Caco-2 (cell line): ENCODE measurements at regions of chr1 and their contacts with region 1.

Region 1: DNA sequence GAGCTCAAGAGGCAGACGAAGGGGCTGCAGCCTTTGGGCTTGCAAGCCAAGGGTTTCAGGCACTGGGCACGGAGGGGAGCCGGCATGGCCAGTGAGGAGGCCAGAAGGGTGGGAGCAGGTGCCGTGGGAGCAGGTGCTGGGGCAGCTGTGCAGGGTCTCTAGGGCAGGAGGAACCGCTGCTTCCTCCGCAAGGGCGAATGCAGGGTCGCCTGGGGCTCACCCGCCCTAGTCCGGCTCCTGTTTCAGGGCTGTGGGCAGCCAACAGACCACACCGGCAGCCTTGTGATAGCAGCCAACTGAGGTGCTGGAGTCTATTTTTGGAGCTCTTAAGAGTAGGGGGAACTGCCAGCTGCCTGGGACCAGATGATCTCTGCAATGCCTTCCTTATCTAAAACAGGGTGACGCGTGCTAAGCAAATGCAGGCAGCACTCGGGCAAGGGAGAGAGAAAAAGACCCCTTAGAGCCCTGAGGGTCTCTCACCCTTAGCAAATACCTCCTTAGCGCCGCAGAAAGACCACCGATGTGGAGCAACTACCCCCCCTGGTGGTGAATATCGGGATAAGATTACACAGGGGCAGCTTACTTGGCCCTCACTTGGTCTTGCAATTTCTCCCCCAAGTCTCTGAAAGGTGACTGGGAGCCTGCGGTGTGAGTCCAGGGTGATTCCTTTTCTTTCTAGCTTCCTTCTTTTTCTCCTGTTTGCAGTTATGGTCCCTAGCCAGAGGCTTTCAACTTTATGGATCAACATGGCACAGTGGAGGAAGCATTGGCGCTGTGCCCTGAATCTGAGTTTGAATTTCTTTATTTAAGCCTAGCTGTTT is 20.7 kb upstream of the MAPKAPK2 start:
- DNase-seq: peak; percentile 59 to 78
- H3K4me3 ChIP-seq: no peak overlapping the region
- H3K4me3 Mint-ChIP-seq: no peak overlapping the region
- H3K27ac Mint-ChIP-seq: no peak overlapping the region
- H3K4me1 ChIP-seq: peaks cover 3% of the 10 kb centered on the region; the same call in 1 of the 2 replicates
- H3K4me1 Mint-ChIP-seq: peaks cover 15% of the 10 kb centered on the region
- H3K27me3 ChIP-seq: no peaks in the 10 kb centered on the region
- H3K27me3 Mint-ChIP-seq: peaks cover 7% of the 10 kb centered on the region
- CTCF ChIP-seq: peak; percentile 72 to 96

Region 2: DNA sequence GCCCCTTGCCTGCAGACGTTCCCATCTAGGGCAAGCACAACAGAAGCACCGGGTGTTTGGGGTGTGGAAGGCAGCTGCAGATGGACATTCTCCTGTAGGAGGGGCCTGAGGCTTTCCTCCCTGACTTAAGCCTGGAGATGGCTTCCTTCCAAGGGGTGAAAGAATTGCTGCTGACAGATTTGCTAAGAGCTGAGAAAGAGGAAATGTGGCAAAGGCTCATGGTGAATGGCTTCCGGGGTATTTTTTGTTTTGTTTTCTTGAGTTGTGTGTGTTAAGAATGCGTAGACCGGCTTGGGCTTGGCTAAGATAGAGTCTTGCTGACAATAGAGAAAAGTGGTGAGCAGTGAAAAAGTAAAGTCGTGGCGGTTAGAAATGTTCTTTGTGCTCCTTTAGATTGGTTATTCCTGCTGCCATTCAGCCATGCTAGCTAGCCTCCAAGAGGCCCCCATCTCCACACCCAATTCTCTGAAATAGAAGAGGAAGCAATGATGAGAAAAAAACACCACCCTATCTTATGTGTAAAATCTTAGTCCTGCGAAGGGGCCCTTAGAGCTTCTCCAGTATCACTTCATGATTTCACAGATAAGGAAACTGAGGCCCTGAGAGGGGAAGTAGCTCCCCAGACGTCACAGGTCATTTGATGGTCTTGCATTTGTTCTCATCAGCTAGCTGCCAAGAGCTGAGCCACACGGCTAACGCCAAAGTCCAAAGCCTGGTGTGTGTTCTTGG is 88.7 kb before region 1 on chr1:
- CTCF ChIA-PET with region 1: no interaction called
- POLR2A ChIA-PET with region 1: no interaction called
- intact Hi-C with region 1: no loop called
- DNase-seq: no peak
- H3K4me3 ChIP-seq: no peak overlapping the region
- H3K4me3 Mint-ChIP-seq: no peak overlapping the region
- H3K27ac Mint-ChIP-seq: no peak overlapping the region
- H3K4me1 ChIP-seq: no peaks in the 10 kb centered on the region
- H3K4me1 Mint-ChIP-seq: no peaks in the 10 kb centered on the region
- H3K27me3 ChIP-seq: no peaks in the 10 kb centered on the region
- H3K27me3 Mint-ChIP-seq: peaks cover 9% of the 10 kb centered on the region
- CTCF ChIP-seq: no peak

Region 3: DNA sequence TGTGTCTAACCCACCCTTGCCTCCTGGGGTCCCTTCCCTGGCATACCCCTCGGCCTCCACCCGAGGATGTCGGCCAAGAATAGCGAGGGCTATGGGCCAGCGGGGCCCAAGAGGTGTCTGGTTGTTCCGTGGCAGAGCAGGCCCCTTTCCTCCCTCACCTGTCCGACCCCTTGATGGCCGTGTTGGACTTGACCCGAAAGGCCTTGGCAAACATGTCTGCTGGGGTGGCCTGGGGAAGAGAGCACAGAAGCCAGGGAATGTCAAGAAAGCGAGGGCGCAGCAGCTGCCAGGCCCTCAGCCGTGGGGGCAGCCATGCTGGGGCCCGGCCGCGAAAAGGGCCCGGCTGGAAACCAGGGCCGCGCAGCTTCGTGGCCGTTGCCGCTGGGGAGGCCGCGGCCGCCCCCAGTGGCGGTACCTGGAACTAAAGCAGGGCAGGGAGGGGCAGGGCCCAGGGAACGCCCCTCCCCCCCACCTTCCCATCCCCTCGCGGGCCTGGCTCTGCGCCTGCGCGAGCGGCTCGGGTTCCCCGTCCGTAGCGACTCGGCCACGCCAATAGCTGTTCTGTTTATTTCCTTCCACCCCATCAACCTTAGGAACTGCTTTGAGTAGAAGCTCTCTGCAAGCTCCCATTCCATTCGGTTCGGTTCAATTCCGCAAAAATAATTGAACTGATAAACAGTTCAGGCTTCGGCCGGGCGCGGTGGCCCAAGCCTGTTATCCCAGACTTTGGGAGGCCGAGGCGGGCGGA is 51.7 kb before region 1 on chr1 and contains the start of gene EIF2D:
- CTCF ChIA-PET with region 1: interaction called, 13 read pairs
- POLR2A ChIA-PET with region 1: interaction called, 3 read pairs
- intact Hi-C with region 1: loop called (anchors 1 kb)
- DNase-seq: peak; percentile 91 to 97
- H3K4me3 ChIP-seq: peak within 1 kb of the TSS; percentile 96
- H3K4me3 Mint-ChIP-seq: peak within 1 kb of the TSS; percentile 82
- H3K27ac Mint-ChIP-seq: peak within 1 kb of the TSS; percentile 76
- H3K4me1 ChIP-seq: no peaks in the 10 kb centered on the region; the same call in 1 of the 2 replicates
- H3K4me1 Mint-ChIP-seq: peaks cover 8% of the 10 kb centered on the region
- H3K27me3 ChIP-seq: no peaks in the 10 kb centered on the region
- H3K27me3 Mint-ChIP-seq: peaks cover 7% of the 10 kb centered on the region
- CTCF ChIP-seq: peak; percentile 87 to 96
- total RNA-seq, gene EIF2D: 37.9 and 39.6 TPM in 2 replicates